PC-3 (cell line): ENCODE measurements at regions of chr19 and their contacts with region 1.

Region 1: GRCh38 chr19:6930190-6930589 is 42.8 kb downstream of the ADGRE1 start:
- DNase-seq: no peak
- ATAC-seq: no peak
- H3K4me3 ChIP-seq: no peak overlapping the region; the same call in 1 of the 2 replicates
- H3K27ac ChIP-seq: no peak overlapping the region
- H3K4me1 ChIP-seq: no peaks in the 10 kb centered on the region
- H3K27me3 ChIP-seq: peaks cover 9% of the 10 kb centered on the region; the same call in 1 of the 2 replicates
- CTCF ChIP-seq: no peak

Region 2: DNA sequence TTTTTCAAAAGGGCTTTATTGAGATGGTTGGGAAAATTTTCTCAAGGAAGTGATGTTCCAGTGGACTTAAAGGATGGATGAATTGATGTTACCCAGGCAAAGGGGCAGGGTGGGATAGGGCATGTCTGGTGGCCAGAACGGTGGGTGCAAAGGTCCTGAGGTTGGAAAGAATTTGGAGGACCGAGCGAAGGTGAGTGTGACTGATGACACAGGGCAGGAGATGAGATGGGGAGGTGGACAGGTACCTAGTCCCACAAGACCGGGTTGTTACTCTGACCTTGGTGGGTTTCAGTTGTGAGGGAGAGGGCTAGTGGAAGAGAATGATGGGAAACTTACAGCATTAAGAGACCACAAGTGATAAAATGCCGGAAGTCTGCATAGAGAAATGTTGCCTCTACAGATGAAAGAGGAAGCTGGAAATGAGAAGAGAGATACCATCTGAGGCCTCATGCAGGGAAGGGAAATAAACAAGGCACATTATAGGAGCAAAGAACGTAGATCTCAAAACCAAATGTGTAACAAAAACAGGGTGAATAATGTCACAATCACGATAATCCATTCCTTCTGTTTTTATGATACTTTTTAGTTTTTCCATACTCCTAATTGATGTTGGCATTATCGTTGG is 38.3 kb before region 1 on chr19:
- CTCF ChIA-PET with region 1: no interaction called
- POLR2A ChIA-PET with region 1: interaction called, 14 read pairs
- intact Hi-C with region 1: no loop called
- DNase-seq: no peak
- ATAC-seq: no peak
- H3K4me3 ChIP-seq: no peak overlapping the region
- H3K27ac ChIP-seq: no peak overlapping the region
- H3K4me1 ChIP-seq: no peaks in the 10 kb centered on the region
- H3K27me3 ChIP-seq: peaks cover 60% of the 10 kb centered on the region
- CTCF ChIP-seq: no peak

Region 3: DNA sequence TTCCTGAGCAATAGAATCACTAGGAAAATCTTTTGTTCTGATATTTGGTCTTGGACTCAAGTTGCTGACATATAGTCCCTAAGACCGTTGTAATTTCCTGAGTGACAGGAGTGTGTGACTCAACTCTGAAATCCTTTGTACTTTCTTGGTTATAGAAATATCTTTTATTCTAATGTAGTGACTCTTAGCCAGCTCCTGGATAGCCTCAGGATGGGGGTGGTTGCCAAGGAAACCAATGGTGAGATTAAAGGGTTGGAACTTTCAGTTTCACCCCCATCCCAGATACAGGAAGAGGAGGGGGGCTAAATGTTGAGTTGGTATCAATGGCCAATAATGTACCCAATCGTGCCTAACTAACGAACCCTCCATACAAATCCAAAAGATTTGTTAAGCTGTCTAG is 49.2 kb after region 1 on chr19:
- CTCF ChIA-PET with region 1: no interaction called
- POLR2A ChIA-PET with region 1: no interaction called
- intact Hi-C with region 1: no loop called
- DNase-seq: no peak
- ATAC-seq: no peak
- H3K4me3 ChIP-seq: no peak overlapping the region
- H3K27ac ChIP-seq: no peak overlapping the region
- H3K4me1 ChIP-seq: no peaks in the 10 kb centered on the region
- H3K27me3 ChIP-seq: peaks cover 57% of the 10 kb centered on the region
- CTCF ChIP-seq: no peak